ENCODE measurements at regions of chr13 and their contacts with region 1.

Region 1: GRCh38 chr13:40485611-40486517 is 180.6 kb downstream of the FOXO1 start:
- DNase-seq: peak; percentile 52 to 94 (median 70)
- ATAC-seq: peak; percentile 93
- H3K4me3 ChIP-seq: peak overlapping the region; percentile 25
- H3K4me3 Mint-ChIP-seq: peak overlapping the region; percentile 78
- H3K27ac ChIP-seq: peak overlapping the region; percentile 70 to 77
- H3K27ac Mint-ChIP-seq: peak overlapping the region; percentile 94
- H3K4me1 ChIP-seq: peaks cover 95% of the 10 kb centered on the region
- H3K4me1 Mint-ChIP-seq: peaks cover 90% of the 10 kb centered on the region
- H3K27me3 ChIP-seq: no peaks in the 10 kb centered on the region
- H3K27me3 Mint-ChIP-seq: no peaks in the 10 kb centered on the region
- CTCF ChIP-seq: no peak

Region 2: GRCh38 chr13:40069173-40070044 is 416.5 kb before region 1 on chr13:
- CTCF ChIA-PET with region 1: no interaction called
- POLR2A ChIA-PET with region 1: interaction called, 4 read pairs
- intact Hi-C with region 1: loop called in 1 of 2 experiments (anchors 5 kb)
- DNase-seq: peak; percentile 54 to 86 (median 67)
- ATAC-seq: peak; percentile 92
- H3K4me3 ChIP-seq: no peak overlapping the region
- H3K4me3 Mint-ChIP-seq: peak overlapping the region; percentile 46
- H3K27ac ChIP-seq: no peak overlapping the region
- H3K27ac Mint-ChIP-seq: peak overlapping the region; percentile 8
- H3K4me1 ChIP-seq: peaks cover 15% of the 10 kb centered on the region
- H3K4me1 Mint-ChIP-seq: peaks cover 38% of the 10 kb centered on the region
- H3K27me3 ChIP-seq: no peaks in the 10 kb centered on the region
- H3K27me3 Mint-ChIP-seq: no peaks in the 10 kb centered on the region
- CTCF ChIP-seq: peak; percentile 91

Region 3: GRCh38 chr13:40200273-40200978 is 285.4 kb before region 1 on chr13:
- CTCF ChIA-PET with region 1: no interaction called
- POLR2A ChIA-PET with region 1: no interaction called
- intact Hi-C with region 1: loop called in 1 of 2 experiments (anchors 5 kb)
- DNase-seq: no peak
- ATAC-seq: no peak
- H3K4me3 ChIP-seq: no peak overlapping the region
- H3K4me3 Mint-ChIP-seq: no peak overlapping the region
- H3K27ac ChIP-seq: no peak overlapping the region
- H3K27ac Mint-ChIP-seq: no peak overlapping the region
- H3K4me1 ChIP-seq: peaks cover 14% of the 10 kb centered on the region
- H3K4me1 Mint-ChIP-seq: peaks cover 77% of the 10 kb centered on the region
- H3K27me3 ChIP-seq: no peaks in the 10 kb centered on the region
- H3K27me3 Mint-ChIP-seq: no peaks in the 10 kb centered on the region
- CTCF ChIP-seq: no peak

Region 4: DNA sequence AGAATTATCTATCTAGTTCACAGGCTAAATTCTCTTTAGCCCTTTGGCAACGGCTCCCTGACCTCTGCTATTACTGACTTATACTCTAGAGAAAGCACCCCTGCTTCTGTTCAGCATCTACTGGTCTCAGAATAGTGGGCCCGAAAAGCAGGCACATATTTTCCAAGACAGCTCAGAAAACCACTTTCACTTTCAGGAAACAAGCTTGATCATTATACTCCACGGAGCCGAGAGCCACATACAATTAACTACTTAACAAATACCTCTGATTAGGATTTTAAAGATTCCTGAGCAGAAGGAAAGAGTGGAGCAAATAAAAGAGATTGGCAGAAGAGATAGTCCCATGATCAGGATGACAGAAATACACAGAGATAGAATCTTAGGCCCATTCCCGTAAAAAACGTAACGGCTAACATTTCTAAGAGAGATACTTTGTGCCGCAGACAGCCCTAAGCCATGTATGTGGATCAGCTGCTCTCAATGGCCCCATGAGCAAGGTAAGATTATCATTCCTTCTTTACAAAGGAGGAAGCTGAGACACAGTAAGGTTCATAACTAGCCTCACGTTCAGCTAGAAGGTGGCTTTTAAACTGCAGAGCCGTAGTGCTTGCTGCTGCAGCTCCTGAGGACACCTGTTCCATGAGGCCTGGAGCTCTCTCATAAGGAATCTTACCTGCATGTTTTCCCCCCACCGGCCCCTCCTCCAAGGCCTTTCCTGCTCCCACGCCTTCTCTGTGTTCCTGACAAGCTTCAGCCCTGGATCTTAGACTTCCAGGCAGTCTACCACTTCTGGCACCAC is 46.7 kb before region 1 on chr13:
- CTCF ChIA-PET with region 1: no interaction called
- POLR2A ChIA-PET with region 1: interaction called, 8 read pairs
- intact Hi-C with region 1: loop called (anchors 5 kb)
- DNase-seq: peak in 4 of 14 experiments; percentile 32 to 53 (median 42)
- ATAC-seq: peak; percentile 61
- H3K4me3 ChIP-seq: peak overlapping the region; percentile 20
- H3K4me3 Mint-ChIP-seq: peak overlapping the region; percentile 74
- H3K27ac ChIP-seq: no peak overlapping the region
- H3K27ac Mint-ChIP-seq: peak overlapping the region; percentile 75
- H3K4me1 ChIP-seq: peaks cover 38% of the 10 kb centered on the region
- H3K4me1 Mint-ChIP-seq: peaks cover 50% of the 10 kb centered on the region
- H3K27me3 ChIP-seq: no peaks in the 10 kb centered on the region
- H3K27me3 Mint-ChIP-seq: no peaks in the 10 kb centered on the region
- CTCF ChIP-seq: no peak

Region 5: GRCh38 chr13:40519637-40520036 is 33.8 kb after region 1 on chr13:
- CTCF ChIA-PET with region 1: no interaction called
- POLR2A ChIA-PET with region 1: interaction called, 4 read pairs
- intact Hi-C with region 1: loop called in 1 of 2 experiments (anchors 5 kb)
- DNase-seq: no peak
- ATAC-seq: no peak
- H3K4me3 ChIP-seq: no peak overlapping the region
- H3K4me3 Mint-ChIP-seq: no peak overlapping the region
- H3K27ac ChIP-seq: no peak overlapping the region
- H3K27ac Mint-ChIP-seq: no peak overlapping the region
- H3K4me1 ChIP-seq: peaks cover 17% of the 10 kb centered on the region
- H3K4me1 Mint-ChIP-seq: peaks cover 33% of the 10 kb centered on the region
- H3K27me3 ChIP-seq: no peaks in the 10 kb centered on the region
- H3K27me3 Mint-ChIP-seq: no peaks in the 10 kb centered on the region
- CTCF ChIP-seq: no peak

Region 6: DNA sequence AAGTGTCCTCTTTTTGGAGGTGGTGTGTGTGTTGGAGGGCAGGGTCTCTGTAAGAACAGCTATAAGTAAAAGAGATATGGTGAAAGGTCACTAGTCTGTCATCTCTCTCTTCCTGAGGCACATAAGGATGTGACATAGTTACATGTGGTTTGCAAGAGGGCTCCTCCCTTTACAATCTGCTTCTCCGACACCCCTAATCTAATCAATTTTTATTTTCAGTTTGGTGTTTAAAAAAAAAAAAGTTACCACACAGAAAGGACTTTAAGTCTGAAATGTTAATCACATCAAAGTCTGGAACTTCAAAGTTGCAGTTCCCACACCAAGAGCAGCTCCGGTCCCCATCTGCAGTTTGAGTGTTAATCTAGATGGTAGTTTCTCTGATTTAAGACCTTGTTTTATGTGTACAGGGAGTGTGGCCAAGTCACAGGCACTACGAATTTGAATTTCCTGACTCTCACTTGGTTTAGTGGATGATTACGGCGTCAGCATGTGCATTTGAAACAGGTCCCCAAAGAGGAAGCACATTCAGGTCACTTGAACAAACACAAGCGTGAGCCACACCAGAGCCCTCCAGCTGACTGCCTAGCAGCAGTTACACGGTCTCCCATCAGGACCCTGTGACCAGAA is 127.4 kb after region 1 on chr13:
- CTCF ChIA-PET with region 1: no interaction called
- POLR2A ChIA-PET with region 1: interaction called, 7 read pairs
- intact Hi-C with region 1: loop called in 1 of 2 experiments (anchors 1 kb)
- DNase-seq: peak; percentile 27 to 89 (median 42)
- ATAC-seq: peak; percentile 81
- H3K4me3 ChIP-seq: peak overlapping the region; percentile 42
- H3K4me3 Mint-ChIP-seq: peak overlapping the region; percentile 73
- H3K27ac ChIP-seq: peak overlapping the region; percentile 70 to 85
- H3K27ac Mint-ChIP-seq: peak overlapping the region; percentile 87
- H3K4me1 ChIP-seq: peaks cover 73% of the 10 kb centered on the region
- H3K4me1 Mint-ChIP-seq: peaks cover 98% of the 10 kb centered on the region
- H3K27me3 ChIP-seq: no peaks in the 10 kb centered on the region
- H3K27me3 Mint-ChIP-seq: no peaks in the 10 kb centered on the region
- CTCF ChIP-seq: no peak